ENCODE measurements at regions of chr18 and their contacts with region 1.

Region 1: GRCh38 chr18:6086731-6087130 is 191.4 kb upstream of the TMEM200C start:
- DNase-seq: no peak

Region 2: GRCh38 chr18:6004683-6005082 is 82.0 kb before region 1 on chr18:
- intact Hi-C with region 1: loop called in 1 of 2 experiments (anchors 2 kb)
- DNase-seq: no peak